Activated naive CD8-positive, alpha-beta T cell treated with anti-CD3 and anti-CD28 coated beads, Interleukin-2, amount 10 ng/mL, durations not matched to agents 7 days and 5 days (primary cell): ENCODE measurements at regions of chr5 and their contacts with region 1.

Region 1: DNA sequence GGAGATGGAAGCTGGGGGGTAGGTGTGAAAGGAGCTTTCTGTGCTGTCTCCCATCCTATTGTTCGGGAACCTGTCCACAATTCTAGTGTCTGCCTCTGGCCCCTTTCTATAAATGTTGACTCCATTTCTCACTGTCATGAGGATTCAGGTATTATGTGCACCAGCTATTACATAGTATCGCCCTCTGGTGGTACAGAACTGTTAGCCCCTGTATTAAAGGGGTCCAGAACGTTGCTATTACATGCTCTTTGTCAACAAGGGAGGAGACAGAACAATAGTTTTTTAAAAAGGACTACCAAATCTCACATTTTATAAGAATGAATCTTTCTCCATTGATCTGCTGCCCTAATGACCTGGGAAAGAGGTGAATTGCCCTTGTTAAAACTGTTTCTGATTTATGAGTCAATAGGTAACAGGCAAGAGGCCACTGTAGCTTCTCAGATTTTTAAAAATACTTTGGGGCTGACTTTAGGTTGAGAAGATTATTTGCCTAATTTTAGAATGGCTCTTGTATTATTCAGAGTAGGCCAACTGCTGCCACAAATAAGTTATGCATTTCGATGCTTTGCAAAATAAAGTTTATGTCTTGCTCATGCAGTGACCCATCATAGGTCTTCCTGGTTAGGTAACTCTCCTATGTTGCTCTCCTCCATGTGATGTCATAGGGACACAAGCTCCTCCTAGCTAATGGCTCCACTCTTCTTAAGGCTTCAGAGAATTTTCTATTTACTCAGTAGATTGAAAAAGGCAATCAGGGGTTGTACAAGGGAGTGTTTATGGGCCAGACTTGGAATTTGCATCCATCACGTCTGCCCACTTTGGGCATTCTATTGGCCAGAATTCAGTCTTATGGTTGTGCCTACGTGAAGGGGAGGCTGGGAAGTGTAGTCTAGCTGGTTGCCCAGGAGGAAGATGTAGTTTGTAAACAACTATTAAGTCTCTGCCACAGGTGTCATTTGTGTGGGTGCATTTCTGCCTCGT is 20.8 kb downstream of the DCANP1 start:
- DNase-seq: no peak
- ATAC-seq: peak; percentile 96
- H3K4me3 Mint-ChIP-seq: peak overlapping the region; percentile 61
- H3K27ac Mint-ChIP-seq: peak overlapping the region; percentile 83
- H3K4me1 Mint-ChIP-seq: peaks cover 16% of the 10 kb centered on the region
- H3K27me3 Mint-ChIP-seq: peaks cover 19% of the 10 kb centered on the region

Region 2: DNA sequence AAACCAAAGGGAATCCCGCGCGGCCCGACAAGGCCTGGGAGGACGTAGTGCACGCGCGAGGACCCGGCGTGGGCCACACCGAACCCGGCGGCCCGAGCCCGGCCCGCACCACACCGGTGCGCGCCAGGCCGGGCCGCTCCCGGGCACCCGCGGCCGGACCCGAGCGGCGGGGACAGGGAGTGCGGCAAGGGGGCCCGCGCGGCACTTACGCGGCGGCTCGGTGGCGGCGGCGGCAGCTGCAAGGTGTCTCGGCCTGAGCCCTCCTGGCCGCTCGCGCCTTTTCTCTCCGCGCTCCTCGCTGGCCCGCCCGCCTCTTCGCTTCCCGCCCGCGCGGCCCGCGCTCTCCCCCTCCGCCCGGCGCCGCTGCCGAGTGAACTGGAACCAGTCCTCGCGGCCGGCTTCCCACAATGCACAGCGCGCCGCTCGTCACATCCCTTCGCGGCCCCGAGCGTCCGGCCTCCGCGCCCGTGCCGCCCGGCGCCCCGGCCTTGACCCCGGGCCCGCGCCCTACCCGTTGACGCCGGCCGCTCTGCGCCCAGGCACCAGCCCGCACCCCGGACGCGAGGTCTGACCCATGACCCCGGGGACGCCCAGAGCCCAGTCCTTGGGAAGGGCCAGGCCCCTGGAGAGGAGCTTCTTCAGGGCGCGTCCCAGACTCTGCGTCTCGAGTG is 27.4 kb before region 1 on chr5 and contains the start of gene MACROH2A1:
- POLR2A ChIA-PET with region 1: interaction called, 17 read pairs
- DNase-seq: peak; percentile 91
- ATAC-seq: peak; percentile 89
- H3K4me3 Mint-ChIP-seq: peak within 1 kb of the TSS; percentile 90
- H3K27ac Mint-ChIP-seq: peak within 1 kb of the TSS; percentile 91
- H3K4me1 Mint-ChIP-seq: peaks cover 38% of the 10 kb centered on the region
- H3K27me3 Mint-ChIP-seq: peaks cover 11% of the 10 kb centered on the region
- total RNA-seq, gene MACROH2A1: 253 to 258 TPM